Panc1 (cell line): ENCODE measurements at regions of chr4 and their contacts with region 1.

Region 1: DNA sequence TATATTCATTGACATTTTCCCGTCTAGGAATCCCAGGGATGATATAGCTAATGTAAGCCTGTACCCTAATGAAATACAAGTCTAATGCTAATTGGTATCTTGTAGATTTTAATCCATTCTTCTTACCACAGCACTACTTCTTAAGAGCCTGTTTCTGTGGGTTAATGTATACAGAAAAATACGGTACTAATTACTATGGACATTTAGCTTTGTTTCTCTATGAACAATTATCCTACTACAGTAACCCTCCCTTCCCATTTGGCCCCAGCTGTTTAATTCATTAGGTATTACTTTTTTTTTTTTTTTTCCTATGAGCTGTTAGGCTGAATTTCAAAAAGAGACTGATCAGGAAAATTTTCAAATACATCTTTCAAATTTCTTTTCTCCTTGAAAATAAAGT is 245.1 kb upstream of the SLC7A11 start:
- DNase-seq: no peak
- ATAC-seq: no peak
- H3K4me3 ChIP-seq: no peak overlapping the region
- H3K27ac ChIP-seq: no peak overlapping the region
- H3K4me1 ChIP-seq: no peaks in the 10 kb centered on the region
- H3K27me3 ChIP-seq: no peaks in the 10 kb centered on the region
- CTCF ChIP-seq: no peak

Region 2: GRCh38 chr4:138458751-138459150 is 28.5 kb before region 1 on chr4:
- CTCF ChIA-PET with region 1: no interaction called
- POLR2A ChIA-PET with region 1: no interaction called
- in situ Hi-C with region 1: no loop called
- intact Hi-C with region 1: no loop called
- DNase-seq: no peak
- ATAC-seq: no peak
- H3K4me3 ChIP-seq: no peak overlapping the region
- H3K27ac ChIP-seq: no peak overlapping the region
- H3K4me1 ChIP-seq: no peaks in the 10 kb centered on the region
- H3K27me3 ChIP-seq: no peaks in the 10 kb centered on the region
- CTCF ChIP-seq: no peak

Region 3: DNA sequence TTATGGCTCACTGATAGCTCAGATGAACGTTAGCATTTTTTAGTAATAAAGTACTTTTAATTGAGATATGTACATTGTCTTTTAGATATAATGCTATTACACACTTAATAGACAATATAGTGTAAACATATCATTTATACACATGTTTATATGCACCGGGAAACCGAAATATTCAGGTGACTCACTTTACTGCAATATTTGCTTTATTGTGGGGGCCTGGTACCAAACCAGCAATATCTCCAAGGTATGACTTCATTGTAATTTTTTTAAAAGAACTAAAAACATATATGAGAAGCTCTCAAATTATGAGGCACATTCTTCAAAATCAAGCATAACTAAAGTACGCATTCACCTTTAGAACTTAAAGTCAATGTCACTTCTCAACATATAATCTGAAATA is 13.9 kb before region 1 on chr4:
- CTCF ChIA-PET with region 1: no interaction called
- POLR2A ChIA-PET with region 1: interaction called, 10 read pairs
- in situ Hi-C with region 1: no loop called
- intact Hi-C with region 1: no loop called
- DNase-seq: no peak
- ATAC-seq: no peak
- H3K4me3 ChIP-seq: no peak overlapping the region
- H3K27ac ChIP-seq: no peak overlapping the region
- H3K4me1 ChIP-seq: no peaks in the 10 kb centered on the region
- H3K27me3 ChIP-seq: no peaks in the 10 kb centered on the region
- CTCF ChIP-seq: no peak